Aorta (tissue), 5 donors: ENCODE measurements at regions of chr16 and their contacts with region 1.

Region 1: DNA sequence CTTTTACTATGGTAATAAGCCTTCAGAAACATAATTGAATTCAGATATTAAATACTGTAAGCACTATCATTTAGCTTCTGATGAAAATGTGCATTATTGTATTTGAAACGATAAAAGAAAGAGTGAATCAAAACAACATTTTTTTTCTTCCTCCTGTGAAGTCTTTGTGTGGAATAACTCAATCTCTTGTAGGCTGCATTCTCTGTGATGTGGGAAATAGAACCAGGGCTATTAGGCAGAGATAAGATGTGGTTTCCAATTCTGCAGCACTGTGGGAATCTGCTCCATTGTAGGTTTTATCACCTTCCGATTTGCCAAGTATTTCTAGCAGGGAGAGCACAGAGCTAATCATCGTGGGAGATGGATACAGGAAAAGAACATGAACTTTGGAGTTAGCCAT is 624.5 kb downstream of the RBFOX1 start:
- DNase-seq: no peak
- ATAC-seq: no peak
- H3K4me3 ChIP-seq: no peak overlapping the region
- H3K27ac ChIP-seq: no peak overlapping the region
- H3K4me1 ChIP-seq: no peaks in the 10 kb centered on the region
- H3K27me3 ChIP-seq: no peaks in the 10 kb centered on the region

Region 2: DNA sequence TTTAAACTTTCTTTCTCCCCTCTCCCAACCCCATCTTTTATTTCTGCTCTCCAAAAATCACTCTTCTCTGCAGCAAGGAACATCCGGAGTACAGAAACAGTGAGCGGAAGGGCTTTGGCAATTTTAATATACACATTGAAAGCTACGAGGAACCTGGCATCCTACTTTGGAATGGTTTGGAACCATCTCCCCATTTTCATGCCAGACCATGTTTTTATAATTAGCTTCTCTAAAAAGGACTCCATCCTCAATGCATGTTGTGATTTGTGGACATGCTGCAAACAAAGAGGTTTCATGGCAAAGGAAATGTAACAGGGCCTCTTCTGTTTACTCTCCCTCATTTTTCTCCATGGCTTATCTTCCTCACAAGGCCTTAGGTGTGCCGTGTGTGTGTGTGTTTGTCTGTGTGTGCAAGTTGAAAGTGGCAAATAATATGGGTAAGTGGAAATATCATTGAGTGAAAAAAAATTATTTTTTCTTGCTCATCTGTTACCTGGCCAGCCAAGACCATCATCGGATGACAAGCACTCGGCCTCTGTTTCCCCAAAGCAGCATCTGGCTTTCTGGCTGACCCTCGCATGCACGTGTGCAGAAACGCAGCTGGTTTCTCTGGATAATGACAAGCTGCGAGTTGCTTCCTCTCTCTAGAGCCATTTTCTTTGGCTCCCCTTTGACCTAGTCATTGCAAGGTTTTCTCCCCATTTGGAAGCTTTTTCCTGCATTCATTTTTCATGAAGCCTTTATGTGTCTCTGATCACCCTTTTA is 48.1 kb after region 1 on chr16:
- intact Hi-C with region 1: loop called in 1 of 2 experiments (anchors 10 kb)
- DNase-seq: no peak
- ATAC-seq: no peak
- H3K4me3 ChIP-seq: no peak overlapping the region
- H3K27ac ChIP-seq: no peak overlapping the region
- H3K4me1 ChIP-seq: no peaks in the 10 kb centered on the region
- H3K27me3 ChIP-seq: no peaks in the 10 kb centered on the region